B cell (primary cell): ENCODE measurements at regions of chr2 and their contacts with region 1.

Region 1: DNA sequence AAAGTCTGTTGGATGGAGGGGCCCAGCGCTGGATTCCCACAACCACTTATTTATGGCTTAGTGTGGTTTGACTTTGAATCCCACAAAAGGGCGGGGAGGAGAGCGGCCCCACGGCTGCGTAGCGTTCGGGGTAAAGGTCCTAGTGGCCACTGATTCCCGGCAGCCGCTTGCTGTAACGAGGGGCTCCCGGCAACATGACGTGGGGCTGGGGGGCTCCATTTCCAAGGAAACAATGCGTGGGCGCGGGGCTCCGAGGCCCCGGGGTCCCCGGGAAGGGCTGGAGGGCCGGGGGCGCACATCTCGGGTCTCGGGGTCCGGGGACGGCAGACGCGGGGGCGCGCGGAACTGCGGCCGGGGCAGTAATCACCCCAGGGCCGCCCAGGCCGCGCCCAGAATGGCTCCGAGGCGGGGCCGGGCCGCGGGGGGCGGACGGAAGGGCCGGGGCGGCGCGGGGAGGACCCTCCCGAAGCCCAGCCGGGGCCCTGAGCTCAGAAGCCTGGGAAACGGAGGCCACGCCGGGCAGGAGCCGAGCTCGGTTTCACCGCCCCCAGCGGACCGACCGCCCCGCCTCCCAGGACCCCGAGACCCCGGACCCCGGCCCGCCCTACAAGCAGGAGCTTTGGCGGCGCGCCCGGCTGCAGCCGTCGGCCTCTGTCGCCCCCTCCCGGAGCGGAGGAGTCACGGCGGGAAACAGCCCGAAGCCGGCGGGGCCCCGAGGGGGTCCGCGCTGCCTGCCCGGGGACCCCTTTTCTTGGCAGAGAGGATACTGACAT is 11.9 kb upstream of the MLPH start:
- DNase-seq: peak; percentile 84
- ATAC-seq: peak; percentile 88
- H3K4me3 ChIP-seq: peak overlapping the region; percentile 12 to 91 (median 71)
- H3K4me3 Mint-ChIP-seq: peak overlapping the region; percentile 87
- H3K27ac ChIP-seq: peak overlapping the region; percentile 47 to 80
- H3K27ac Mint-ChIP-seq: peak overlapping the region; percentile 82
- H3K4me1 ChIP-seq: peaks cover 11 to 15% of the 10 kb centered on the region in 2 donors
- H3K4me1 Mint-ChIP-seq: peaks cover 11% of the 10 kb centered on the region
- H3K27me3 ChIP-seq: peaks cover 0 to 21% (median 15%) of the 10 kb centered on the region in 4 experiments
- H3K27me3 Mint-ChIP-seq: peaks cover 32% of the 10 kb centered on the region
- CTCF ChIP-seq: peak; percentile 92

Region 2: GRCh38 chr2:236343400-236344161 is 1131.5 kb before region 1 on chr2:
- CTCF ChIA-PET with region 1: no interaction called
- POLR2A ChIA-PET with region 1: no interaction called
- intact Hi-C with region 1: loop called (anchors 5 kb)
- DNase-seq: peak; percentile 71
- ATAC-seq: peak; percentile 17
- H3K4me3 ChIP-seq: no peak overlapping the region
- H3K4me3 Mint-ChIP-seq: no peak overlapping the region
- H3K27ac ChIP-seq: no peak overlapping the region
- H3K27ac Mint-ChIP-seq: no peak overlapping the region
- H3K4me1 ChIP-seq: no peaks in the 10 kb centered on the region
- H3K4me1 Mint-ChIP-seq: no peaks in the 10 kb centered on the region
- H3K27me3 ChIP-seq: peaks cover 0 to 6% (median 2%) of the 10 kb centered on the region in 4 experiments
- H3K27me3 Mint-ChIP-seq: peaks cover 10% of the 10 kb centered on the region
- CTCF ChIP-seq: peak; percentile 86

Region 3: DNA sequence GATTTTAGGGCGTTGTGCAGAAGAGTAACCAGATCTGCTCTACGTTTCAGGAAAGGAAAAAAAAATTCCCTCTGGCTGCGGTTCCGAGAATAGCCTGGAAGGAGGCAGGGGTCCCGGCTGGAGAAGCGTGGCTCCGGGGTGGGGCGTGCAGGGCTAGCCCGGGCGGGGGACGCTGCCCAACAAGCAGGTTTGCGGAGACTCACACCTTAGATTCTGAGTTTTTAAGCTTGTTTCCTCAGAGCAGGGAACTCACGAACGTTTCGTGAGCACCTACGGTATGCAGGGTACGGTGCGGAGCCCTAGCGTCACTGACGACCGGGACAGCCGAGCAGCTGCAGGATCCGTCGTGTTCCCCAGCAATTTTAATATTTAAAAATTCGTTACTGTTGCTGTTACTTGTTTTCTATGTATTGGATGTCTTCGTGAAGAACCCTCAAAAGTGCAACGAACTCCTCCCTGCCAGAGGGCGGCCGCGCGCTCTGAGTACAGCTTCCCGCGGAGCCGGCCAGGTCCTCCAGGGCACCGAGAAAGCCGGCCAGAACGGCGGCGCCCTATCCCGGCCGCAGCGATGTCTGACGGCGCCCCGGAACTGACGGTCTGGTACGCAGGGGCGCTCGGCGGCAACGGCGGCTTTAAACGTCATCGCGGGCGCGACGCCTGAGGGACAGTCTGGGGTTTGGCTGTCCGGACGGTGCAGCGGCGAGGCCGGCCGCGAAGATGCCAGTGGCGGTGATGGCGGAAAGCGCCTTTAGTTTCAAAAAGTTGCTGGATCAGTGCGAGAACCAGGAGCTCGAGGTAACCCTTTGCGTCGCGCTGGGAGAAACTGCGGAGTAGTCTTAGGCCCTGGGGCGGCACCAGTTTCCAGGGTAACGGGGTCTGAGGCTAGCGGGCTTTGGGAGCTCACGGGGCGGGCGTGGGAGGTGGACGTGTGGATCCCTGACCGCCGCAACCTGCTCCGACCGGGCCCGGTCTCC is 389.6 kb before region 1 on chr2 and contains the start of gene COPS8:
- CTCF ChIA-PET with region 1: interaction called, 5 read pairs
- POLR2A ChIA-PET with region 1: interaction called, 3 read pairs
- intact Hi-C with region 1: loop called (anchors 1 kb)
- DNase-seq: peak; percentile 92
- ATAC-seq: peak; percentile 99
- H3K4me3 ChIP-seq: peak within 1 kb of the TSS; percentile 78 to 92 (median 84)
- H3K4me3 Mint-ChIP-seq: peak within 1 kb of the TSS; percentile 96
- H3K27ac ChIP-seq: peak within 1 kb of the TSS; percentile 59 to 90
- H3K27ac Mint-ChIP-seq: peak within 1 kb of the TSS; percentile 94
- H3K4me1 ChIP-seq: peaks cover 11 to 12% of the 10 kb centered on the region in 2 donors
- H3K4me1 Mint-ChIP-seq: peaks cover 16% of the 10 kb centered on the region
- H3K27me3 ChIP-seq: no peaks in the 10 kb centered on the region
- H3K27me3 Mint-ChIP-seq: no peaks in the 10 kb centered on the region
- CTCF ChIP-seq: peak; percentile 18
- total RNA-seq, gene COPS8: 32.7 and 34.2 TPM in 2 replicates

Region 4: DNA sequence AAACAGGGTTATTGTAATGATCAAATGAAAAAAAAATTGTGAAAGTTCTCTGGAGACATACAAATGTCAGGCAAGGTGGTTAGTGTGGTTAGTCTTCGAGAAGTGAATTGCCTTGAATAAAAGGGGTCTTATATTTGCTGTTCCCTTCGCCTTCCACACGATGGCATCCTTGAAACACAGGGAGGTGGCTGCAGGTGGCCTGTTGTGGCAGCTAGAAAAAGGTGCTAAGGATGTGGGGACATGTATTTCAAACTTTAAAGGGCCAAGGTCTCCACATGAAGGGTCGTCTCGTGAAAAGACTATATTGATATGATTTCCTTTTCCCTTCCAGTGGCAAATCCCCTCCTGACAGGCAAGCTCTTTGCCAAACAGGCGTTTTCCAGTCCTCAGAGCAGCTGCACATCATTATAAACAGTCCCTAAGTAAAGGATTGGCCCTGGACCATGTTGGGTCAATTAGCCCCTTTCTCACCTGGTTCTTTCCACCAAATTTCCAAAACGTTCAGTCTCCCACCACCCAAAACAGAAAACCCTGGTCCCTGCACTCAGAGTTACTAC is 321.0 kb before region 1 on chr2:
- CTCF ChIA-PET with region 1: interaction called, 6 read pairs
- POLR2A ChIA-PET with region 1: no interaction called
- intact Hi-C with region 1: loop called (anchors 2 kb)
- DNase-seq: peak; percentile 35
- ATAC-seq: no peak
- H3K4me3 ChIP-seq: no peak overlapping the region
- H3K4me3 Mint-ChIP-seq: no peak overlapping the region
- H3K27ac ChIP-seq: no peak overlapping the region
- H3K27ac Mint-ChIP-seq: no peak overlapping the region
- H3K4me1 ChIP-seq: no peaks in the 10 kb centered on the region
- H3K4me1 Mint-ChIP-seq: peaks cover under 1% of the 10 kb centered on the region
- H3K27me3 ChIP-seq: no peaks in the 10 kb centered on the region
- H3K27me3 Mint-ChIP-seq: peaks cover 13% of the 10 kb centered on the region
- CTCF ChIP-seq: peak; percentile 57

Region 5: GRCh38 chr2:237223201-237223861 is 251.8 kb before region 1 on chr2:
- CTCF ChIA-PET with region 1: no interaction called
- POLR2A ChIA-PET with region 1: no interaction called
- intact Hi-C with region 1: no loop called
- DNase-seq: no peak
- ATAC-seq: no peak
- H3K4me3 ChIP-seq: no peak overlapping the region
- H3K4me3 Mint-ChIP-seq: no peak overlapping the region
- H3K27ac ChIP-seq: no peak overlapping the region
- H3K27ac Mint-ChIP-seq: no peak overlapping the region
- H3K4me1 ChIP-seq: no peaks in the 10 kb centered on the region
- H3K4me1 Mint-ChIP-seq: no peaks in the 10 kb centered on the region
- H3K27me3 ChIP-seq: peaks cover 0 to 8% (median 1%) of the 10 kb centered on the region in 4 experiments
- H3K27me3 Mint-ChIP-seq: peaks cover 20% of the 10 kb centered on the region
- CTCF ChIP-seq: no peak

Region 6: DNA sequence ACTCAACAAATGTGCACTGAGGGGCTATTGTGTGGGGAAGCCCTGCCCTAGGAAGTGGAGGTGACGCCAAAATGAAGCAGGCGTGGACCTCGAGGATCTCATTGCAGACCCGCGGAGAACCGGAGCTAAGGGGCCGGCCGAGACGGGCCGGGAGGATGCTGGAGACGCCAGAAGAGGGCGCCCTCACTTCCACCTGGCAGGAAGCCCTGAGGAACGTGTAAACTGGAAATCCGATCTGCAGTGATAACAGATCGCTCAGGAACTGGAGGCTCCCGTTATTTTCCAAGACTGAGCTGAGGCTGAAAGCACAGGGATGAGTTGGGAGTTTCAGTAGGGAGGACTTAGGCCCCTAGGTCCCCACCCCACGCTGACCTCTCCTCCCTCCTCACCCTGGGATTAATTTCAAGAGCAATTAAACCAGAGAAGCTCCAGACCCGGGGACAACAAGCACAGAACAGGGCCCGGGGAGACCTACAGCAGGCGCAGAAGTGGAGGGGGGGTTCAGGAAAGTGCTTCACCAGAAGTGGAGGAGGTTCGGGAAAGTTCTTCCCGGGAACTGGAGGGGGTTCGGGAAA is 53.5 kb before region 1 on chr2:
- CTCF ChIA-PET with region 1: interaction called, 10 read pairs
- POLR2A ChIA-PET with region 1: no interaction called
- intact Hi-C with region 1: loop called (anchors 1 kb)
- DNase-seq: peak; percentile 44
- ATAC-seq: peak; percentile 31
- H3K4me3 ChIP-seq: no peak overlapping the region
- H3K4me3 Mint-ChIP-seq: no peak overlapping the region
- H3K27ac ChIP-seq: no peak overlapping the region
- H3K27ac Mint-ChIP-seq: no peak overlapping the region
- H3K4me1 ChIP-seq: peaks cover 0 to 7% of the 10 kb centered on the region in 2 donors
- H3K4me1 Mint-ChIP-seq: peaks cover 2% of the 10 kb centered on the region
- H3K27me3 ChIP-seq: peaks cover 0 to 20% (median 8%) of the 10 kb centered on the region in 4 experiments
- H3K27me3 Mint-ChIP-seq: peaks cover 40% of the 10 kb centered on the region
- CTCF ChIP-seq: peak; percentile 36

Region 7: DNA sequence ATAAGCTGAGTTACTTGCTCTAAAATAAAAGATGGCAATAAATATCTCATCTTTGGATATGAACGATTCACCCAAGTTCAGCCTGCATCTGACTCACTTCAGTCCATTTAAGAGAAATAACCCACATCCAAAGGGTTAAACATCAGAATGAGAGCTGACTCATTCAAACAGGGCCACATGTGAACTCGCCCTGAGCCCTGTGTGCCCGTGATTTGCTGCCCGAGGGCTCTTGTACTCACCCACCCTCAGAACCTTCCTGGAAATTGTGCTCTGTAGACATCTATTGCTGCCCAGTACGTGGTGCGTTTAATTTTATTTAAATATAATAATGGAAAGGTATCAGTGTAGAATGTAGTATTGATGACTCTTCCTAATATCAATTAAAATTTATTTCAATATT is 256.5 kb after region 1 on chr2:
- CTCF ChIA-PET with region 1: no interaction called
- POLR2A ChIA-PET with region 1: no interaction called
- intact Hi-C with region 1: no loop called
- DNase-seq: no peak
- ATAC-seq: no peak
- H3K4me3 ChIP-seq: no peak overlapping the region
- H3K4me3 Mint-ChIP-seq: no peak overlapping the region
- H3K27ac ChIP-seq: no peak overlapping the region
- H3K27ac Mint-ChIP-seq: peak overlapping the region; percentile 26
- H3K4me1 ChIP-seq: peaks cover 3 to 8% of the 10 kb centered on the region in 2 donors
- H3K4me1 Mint-ChIP-seq: peaks cover 34% of the 10 kb centered on the region
- H3K27me3 ChIP-seq: no peaks in the 10 kb centered on the region
- H3K27me3 Mint-ChIP-seq: no peaks in the 10 kb centered on the region
- CTCF ChIP-seq: no peak